ENCODE measurements at regions of chr1 and their contacts with region 1.

Region 1: GRCh38 chr1:8554956-8555534 is 237.1 kb downstream of the SLC45A1 start:
- DNase-seq: no peak
- ATAC-seq: no peak
- H3K4me3 ChIP-seq: no peak overlapping the region
- H3K4me1 ChIP-seq: peaks cover 9% of the 10 kb centered on the region
- CTCF ChIP-seq: no peak

Region 2: DNA sequence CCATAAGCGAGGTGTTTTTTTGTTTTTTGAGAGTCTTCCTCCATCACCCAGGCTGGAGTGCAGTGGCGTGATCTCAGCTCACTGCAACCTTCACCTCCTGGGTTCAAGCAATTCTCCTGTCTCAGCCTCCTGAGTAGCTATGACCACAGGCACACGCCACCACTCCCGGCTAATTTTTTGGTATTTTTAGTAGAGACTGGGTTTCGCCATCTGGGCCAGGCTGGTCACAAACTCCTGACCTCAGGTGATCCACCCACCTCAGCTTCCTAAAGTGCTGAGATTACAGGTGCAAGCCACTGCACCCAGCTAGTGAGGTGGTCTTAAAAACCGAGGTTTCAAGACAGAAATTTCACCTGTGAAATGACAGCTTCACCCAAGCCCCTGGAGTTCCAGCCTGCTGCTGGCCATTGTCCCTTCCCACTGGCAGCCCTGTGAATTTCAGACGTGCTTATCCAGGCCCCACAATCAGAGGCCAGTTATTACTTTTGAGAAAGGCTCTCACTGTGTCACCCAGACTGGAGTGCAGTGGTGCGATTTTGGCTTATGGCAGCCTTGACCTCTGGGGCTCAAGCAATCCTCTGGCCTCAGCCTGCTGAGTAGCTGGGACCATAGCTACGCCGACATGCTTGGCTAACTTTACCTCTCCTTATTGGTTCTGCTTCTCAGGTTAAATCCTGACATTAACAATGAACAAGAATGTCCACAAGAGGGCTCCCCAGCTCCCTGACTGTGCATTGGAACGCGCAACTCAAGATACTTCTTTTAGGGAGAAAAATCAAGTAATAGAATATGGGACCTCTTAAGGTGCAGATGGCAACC is 304.1 kb after region 1 on chr1:
- intact Hi-C with region 1: loop called in 1 of 2 experiments (anchors 10 kb)
- DNase-seq: peak in 1 of 3 donors; percentile 70
- ATAC-seq: peak; percentile 62
- H3K4me3 ChIP-seq: no peak overlapping the region
- H3K4me1 ChIP-seq: no peaks in the 10 kb centered on the region
- CTCF ChIP-seq: no peak

Region 3: DNA sequence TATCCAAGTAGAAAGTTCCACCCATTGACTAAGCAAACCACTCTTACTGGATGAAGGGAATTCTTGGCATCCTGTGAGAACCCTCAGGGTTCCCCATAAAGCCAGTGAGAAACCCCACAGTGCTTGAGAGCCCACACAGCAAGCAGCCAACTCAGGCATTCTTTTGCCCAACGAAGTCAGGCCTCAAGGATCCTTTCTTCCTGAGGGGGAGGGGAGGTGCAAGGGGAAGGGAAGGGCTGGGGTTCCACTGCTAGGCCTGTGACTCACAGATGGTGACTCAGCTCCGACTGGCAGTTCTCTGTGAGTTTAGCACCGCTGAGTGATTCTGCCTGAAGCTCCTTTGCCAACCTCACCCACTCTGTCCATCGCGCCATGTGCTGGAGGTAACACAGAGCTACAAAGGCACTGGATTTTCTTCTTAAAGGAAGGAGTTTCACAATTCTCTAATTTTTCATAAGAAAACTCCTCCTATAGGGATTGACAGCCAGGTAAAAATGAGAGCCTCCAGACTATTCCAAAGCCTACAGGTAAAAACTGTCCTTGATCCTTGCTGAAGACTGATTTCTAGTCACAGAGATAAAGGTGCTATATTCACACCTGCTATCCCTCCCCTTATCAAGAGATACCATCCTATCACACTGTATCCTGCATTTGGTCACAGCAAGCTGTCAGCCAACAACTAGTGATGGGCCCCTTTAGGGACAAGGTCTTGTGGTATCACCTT is 318.6 kb after region 1 on chr1:
- intact Hi-C with region 1: no loop called
- DNase-seq: peak; percentile 68 to 85 (median 80)
- ATAC-seq: peak; percentile 77
- H3K4me3 ChIP-seq: no peak overlapping the region
- H3K4me1 ChIP-seq: peaks cover 76% of the 10 kb centered on the region
- CTCF ChIP-seq: no peak